Caco-2 (cell line): ENCODE measurements at regions of chr1 and their contacts with region 1.

Region 1: GRCh38 chr1:206935491-206936067 is 10.7 kb downstream of the PIGR start:
- DNase-seq: peak; percentile 66 to 78
- H3K4me3 ChIP-seq: no peak overlapping the region
- H3K4me3 Mint-ChIP-seq: no peak overlapping the region
- H3K27ac Mint-ChIP-seq: no peak overlapping the region
- H3K4me1 ChIP-seq: no peaks in the 10 kb centered on the region
- H3K4me1 Mint-ChIP-seq: no peaks in the 10 kb centered on the region
- H3K27me3 ChIP-seq: no peaks in the 10 kb centered on the region
- H3K27me3 Mint-ChIP-seq: no peaks in the 10 kb centered on the region
- CTCF ChIP-seq: peak; percentile 86 to 94

Region 2: GRCh38 chr1:207077470-207078377 is 142.1 kb after region 1 on chr1:
- CTCF ChIA-PET with region 1: no interaction called
- POLR2A ChIA-PET with region 1: no interaction called
- intact Hi-C with region 1: loop called (anchors 5 kb)
- DNase-seq: peak; percentile 58 to 81
- H3K4me3 ChIP-seq: no peak overlapping the region
- H3K4me3 Mint-ChIP-seq: no peak overlapping the region
- H3K27ac Mint-ChIP-seq: no peak overlapping the region
- H3K4me1 ChIP-seq: no peaks in the 10 kb centered on the region
- H3K4me1 Mint-ChIP-seq: no peaks in the 10 kb centered on the region
- H3K27me3 ChIP-seq: no peaks in the 10 kb centered on the region
- H3K27me3 Mint-ChIP-seq: no peaks in the 10 kb centered on the region
- CTCF ChIP-seq: peak; percentile 89 to 92